Breast epithelium (tissue), 4 donors: ENCODE measurements at regions of chr20 and their contacts with region 1.

Region 1: DNA sequence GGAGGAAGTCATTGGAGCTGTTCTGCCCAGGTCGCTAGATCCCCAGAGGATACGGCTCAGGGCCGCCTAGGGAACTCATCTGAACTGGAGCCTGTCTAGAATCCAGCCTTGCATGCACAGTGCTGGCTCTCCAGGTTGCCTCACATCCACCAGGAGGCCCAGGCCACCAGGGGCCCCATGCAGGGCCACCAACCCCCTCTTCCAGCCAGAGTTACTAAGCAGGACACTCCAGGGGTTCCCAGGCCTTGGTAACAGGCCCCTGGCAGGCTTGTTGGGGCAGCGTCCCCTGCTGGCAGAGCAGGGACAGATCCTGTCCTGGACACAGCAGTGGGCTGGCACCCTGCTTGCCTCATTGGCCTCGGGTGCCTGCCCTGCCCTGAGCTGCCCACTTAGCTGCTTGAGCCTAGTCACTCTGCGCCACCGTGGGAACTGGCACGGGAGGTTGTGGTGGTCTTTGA is 35.3 kb downstream of the EFCAB8 start:
- DNase-seq: no peak
- H3K4me3 ChIP-seq: no peak overlapping the region
- H3K27ac ChIP-seq: no peak overlapping the region
- H3K4me1 ChIP-seq: no peaks in the 10 kb centered on the region
- H3K27me3 ChIP-seq: no peaks in the 10 kb centered on the region
- CTCF ChIP-seq: no peak
- POLR2A ChIP-seq: no peak

Region 2: DNA sequence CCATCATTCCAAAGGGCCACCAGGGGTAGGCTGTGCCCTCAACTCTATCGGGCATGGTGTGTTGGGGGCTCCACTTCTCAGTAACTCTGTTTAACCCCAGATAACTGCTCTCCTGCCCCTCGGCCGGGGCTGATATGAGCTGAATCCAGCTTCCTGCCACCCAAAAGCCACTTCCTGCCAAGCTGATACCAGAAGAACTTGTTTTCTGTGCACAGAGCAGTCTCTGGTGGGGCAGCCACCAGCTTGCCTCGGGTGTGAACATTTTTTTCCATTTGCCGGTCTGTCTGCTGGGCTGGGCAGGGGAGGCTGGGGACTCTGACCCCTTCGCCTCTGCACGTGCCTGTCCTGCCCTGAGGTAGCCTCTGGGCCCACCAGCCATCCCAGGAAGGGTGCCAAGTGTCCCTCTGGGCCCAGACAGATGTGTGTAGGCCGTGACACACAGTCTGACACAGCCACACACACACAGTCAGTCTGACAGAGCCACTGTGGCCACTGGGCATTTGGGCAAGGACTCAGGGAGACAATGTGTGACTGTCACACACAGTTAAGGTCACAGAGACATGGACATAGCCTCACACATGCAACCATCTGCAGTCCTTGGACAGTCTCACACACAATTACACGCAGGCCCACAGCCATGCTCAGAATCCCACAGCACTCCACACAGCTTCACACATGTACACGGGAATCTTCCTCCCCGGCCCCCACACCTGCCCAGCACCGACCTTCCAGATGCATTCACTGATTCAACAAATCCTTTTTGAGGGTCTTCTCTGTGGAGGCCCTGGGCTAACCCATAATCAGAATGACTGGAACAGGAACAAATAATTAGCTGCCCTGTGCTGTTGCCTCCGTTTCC is 354.0 kb before region 1 on chr20:
- intact Hi-C with region 1: no loop called
- DNase-seq: no peak
- H3K4me3 ChIP-seq: no peak overlapping the region
- H3K27ac ChIP-seq: peak overlapping the region in 1 of 2 donors; percentile 25
- H3K4me1 ChIP-seq: no peaks in the 10 kb centered on the region
- H3K27me3 ChIP-seq: no peaks in the 10 kb centered on the region
- CTCF ChIP-seq: no peak
- POLR2A ChIP-seq: no peak

Region 3: GRCh38 chr20:32960849-32961731 is 67.0 kb after region 1 on chr20:
- intact Hi-C with region 1: loop called (anchors 5 kb)
- DNase-seq: no peak
- H3K4me3 ChIP-seq: no peak overlapping the region
- H3K27ac ChIP-seq: no peak overlapping the region
- H3K4me1 ChIP-seq: no peaks in the 10 kb centered on the region
- H3K27me3 ChIP-seq: no peaks in the 10 kb centered on the region
- CTCF ChIP-seq: no peak
- POLR2A ChIP-seq: no peak